ENCODE measurements at regions of chr14 and their contacts with region 1.

Region 1: DNA sequence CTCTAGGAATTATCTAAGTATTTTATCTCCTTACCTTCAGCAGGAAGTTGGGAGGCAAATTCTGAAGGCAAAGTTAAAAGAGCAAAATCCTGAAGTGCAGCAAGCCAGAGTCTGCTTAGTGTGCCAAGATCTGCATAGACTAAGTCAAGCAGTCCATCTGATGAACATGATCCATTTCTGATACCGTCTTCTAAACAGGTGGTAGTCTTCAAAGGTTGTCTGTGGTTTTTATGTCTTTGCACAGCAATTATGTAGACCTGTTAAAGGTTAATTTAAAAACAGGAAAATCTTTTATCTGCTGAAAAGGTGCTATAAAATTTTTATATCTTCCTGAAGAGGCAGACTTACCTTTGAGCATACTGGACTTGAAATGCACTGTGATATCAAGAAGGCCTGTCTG is 105.3 kb upstream of the HECTD1 start:
- DNase-seq: no peak
- ATAC-seq: no peak
- H3K4me3 Mint-ChIP-seq: no peak overlapping the region
- H3K27ac Mint-ChIP-seq: no peak overlapping the region
- H3K4me1 Mint-ChIP-seq: no peaks in the 10 kb centered on the region
- H3K27me3 Mint-ChIP-seq: no peaks in the 10 kb centered on the region

Region 2: GRCh38 chr14:31346097-31346496 is 33.2 kb after region 1 on chr14:
- CTCF ChIA-PET with region 1: no interaction called
- POLR2A ChIA-PET with region 1: interaction called, 10 read pairs
- intact Hi-C with region 1: no loop called
- DNase-seq: no peak
- ATAC-seq: peak; percentile 19
- H3K4me3 Mint-ChIP-seq: no peak overlapping the region
- H3K27ac Mint-ChIP-seq: no peak overlapping the region
- H3K4me1 Mint-ChIP-seq: no peaks in the 10 kb centered on the region
- H3K27me3 Mint-ChIP-seq: no peaks in the 10 kb centered on the region

Region 3: DNA sequence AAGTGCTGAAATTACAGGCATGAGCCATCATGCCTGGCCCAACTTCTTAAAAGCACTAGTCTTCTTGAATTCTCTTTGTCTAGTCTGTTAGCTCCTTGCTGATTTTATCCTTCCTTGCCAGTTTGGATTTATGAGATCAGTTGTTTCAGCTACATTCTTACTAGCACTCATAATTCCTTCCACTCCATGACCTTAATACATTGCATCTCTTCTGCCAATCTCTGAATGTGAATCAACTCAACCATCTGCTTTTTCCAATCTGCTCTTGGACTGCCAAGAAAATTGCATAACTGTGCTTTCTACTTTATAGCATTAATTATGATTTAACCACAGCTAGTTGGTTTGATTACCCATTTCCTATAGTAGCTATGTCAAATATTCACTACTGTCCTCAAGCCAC is 122.3 kb after region 1 on chr14:
- CTCF ChIA-PET with region 1: no interaction called
- POLR2A ChIA-PET with region 1: no interaction called
- intact Hi-C with region 1: no loop called
- DNase-seq: no peak
- ATAC-seq: no peak
- H3K4me3 Mint-ChIP-seq: no peak overlapping the region
- H3K27ac Mint-ChIP-seq: no peak overlapping the region
- H3K4me1 Mint-ChIP-seq: peaks cover 4% of the 10 kb centered on the region
- H3K27me3 Mint-ChIP-seq: no peaks in the 10 kb centered on the region

Region 4: GRCh38 chr14:32028599-32028998 is 715.7 kb after region 1 on chr14:
- CTCF ChIA-PET with region 1: no interaction called
- POLR2A ChIA-PET with region 1: no interaction called
- intact Hi-C with region 1: no loop called
- DNase-seq: no peak
- ATAC-seq: no peak
- H3K4me3 Mint-ChIP-seq: no peak overlapping the region
- H3K27ac Mint-ChIP-seq: no peak overlapping the region
- H3K4me1 Mint-ChIP-seq: no peaks in the 10 kb centered on the region
- H3K27me3 Mint-ChIP-seq: peaks cover 6% of the 10 kb centered on the region

Measured in activated CD4-positive, alpha-beta T cell treated with anti-CD3 and anti-CD28 coated beads for 36 hours (primary cell).